Sigmoid colon (tissue), 7 donors: ENCODE measurements at regions of chr6 and their contacts with region 1.

Region 1: GRCh38 chr6:32885698-32886286 is 31.8 kb downstream of the PSMB9 start:
- DNase-seq: no peak
- H3K4me3 ChIP-seq: no peak overlapping the region
- H3K27ac ChIP-seq: peak overlapping the region in 3 of 4 donors; percentile 49 to 74 (median 67)
- H3K4me1 ChIP-seq: peaks cover 0 to 22% (median 20%) of the 10 kb centered on the region in 4 donors
- H3K27me3 ChIP-seq: no peaks in the 10 kb centered on the region
- CTCF ChIP-seq: peak; percentile 25 to 66 (median 56)
- EP300 ChIP-seq: no peak
- POLR2A ChIP-seq: no peak

Region 2: GRCh38 chr6:32952817-32953739 is 67.3 kb after region 1 on chr6 and contains the start of gene HLA-DMA:
- intact Hi-C with region 1: loop called (anchors 2 kb)
- DNase-seq: peak; percentile 93
- H3K4me3 ChIP-seq: peak within 1 kb of the TSS in 3 of 4 donors; percentile 1 to 38 (median 31)
- H3K27ac ChIP-seq: peak within 1 kb of the TSS; percentile 72 to 83 (median 80)
- H3K4me1 ChIP-seq: peaks cover 0 to 12% (median 4%) of the 10 kb centered on the region in 4 donors
- H3K27me3 ChIP-seq: no peaks in the 10 kb centered on the region
- CTCF ChIP-seq: peak; percentile 57 to 78 (median 76)
- EP300 ChIP-seq: peak in 1 of 4 donors; percentile 14
- POLR2A ChIP-seq: peak; percentile 31 to 53
- total RNA-seq, gene HLA-DMA: 16.3 to 26.0 (median 20.2) TPM

Region 3: DNA sequence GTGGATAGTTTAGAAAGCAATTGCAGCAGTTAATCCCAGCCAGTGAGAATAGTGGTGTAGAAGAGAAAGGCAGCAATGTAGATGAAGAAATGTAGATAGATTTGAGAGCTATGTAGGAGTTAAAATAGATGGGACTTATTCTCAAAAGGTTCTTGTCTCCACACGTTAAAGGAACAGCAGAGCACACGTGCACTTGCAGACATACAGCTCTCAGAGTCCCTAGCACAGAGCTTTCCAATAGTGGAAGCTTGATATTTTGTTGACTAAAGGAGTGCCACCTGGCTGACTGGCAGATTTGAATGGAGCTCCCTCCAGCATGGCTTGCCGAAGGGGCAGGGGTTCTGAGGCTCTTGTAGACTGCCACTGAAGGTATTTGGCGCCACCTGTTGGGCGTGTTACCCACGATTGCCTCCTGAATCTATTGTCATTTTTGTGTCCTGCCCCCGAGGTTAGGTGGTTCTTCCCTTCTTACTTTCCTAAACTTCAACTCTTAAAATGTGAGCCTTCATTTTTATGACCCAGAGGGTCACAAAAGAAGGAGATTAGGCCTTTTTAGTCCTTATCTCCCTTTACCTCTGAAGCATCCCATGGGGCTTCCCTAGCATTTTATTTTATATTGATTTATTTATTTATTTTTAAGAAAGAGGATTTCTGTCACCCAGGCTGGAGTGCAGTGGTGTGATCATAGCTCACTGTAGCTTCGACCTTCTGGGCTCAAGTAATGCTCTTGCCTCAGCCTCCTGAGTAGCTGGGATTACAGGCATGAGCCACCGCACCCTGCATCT is 99.0 kb after region 1 on chr6:
- intact Hi-C with region 1: loop called (anchors 2 kb)
- DNase-seq: peak; percentile 93
- H3K4me3 ChIP-seq: no peak overlapping the region
- H3K27ac ChIP-seq: peak overlapping the region in 2 of 4 donors; percentile 30 to 75
- H3K4me1 ChIP-seq: peaks cover 0 to 41% (median 18%) of the 10 kb centered on the region in 4 donors
- H3K27me3 ChIP-seq: no peaks in the 10 kb centered on the region
- CTCF ChIP-seq: peak; percentile 79 to 90 (median 86)
- EP300 ChIP-seq: no peak
- POLR2A ChIP-seq: no peak